Endothelial cell of umbilical vein (primary cell): ENCODE measurements at regions of chr6 and their contacts with region 1.

Region 1: GRCh38 chr6:151765444-151765886 is 42.0 kb upstream of the ESR1 start:
- DNase-seq: peak; percentile 98
- H3K4me3 ChIP-seq: no peak overlapping the region
- H3K27ac ChIP-seq: peak overlapping the region; percentile 74
- H3K4me1 ChIP-seq: peaks cover 22% of the 10 kb centered on the region
- H3K27me3 ChIP-seq: no peaks in the 10 kb centered on the region
- CTCF ChIP-seq: peak; percentile 50 to 59
- POLR2A ChIP-seq: no peak

Region 2: DNA sequence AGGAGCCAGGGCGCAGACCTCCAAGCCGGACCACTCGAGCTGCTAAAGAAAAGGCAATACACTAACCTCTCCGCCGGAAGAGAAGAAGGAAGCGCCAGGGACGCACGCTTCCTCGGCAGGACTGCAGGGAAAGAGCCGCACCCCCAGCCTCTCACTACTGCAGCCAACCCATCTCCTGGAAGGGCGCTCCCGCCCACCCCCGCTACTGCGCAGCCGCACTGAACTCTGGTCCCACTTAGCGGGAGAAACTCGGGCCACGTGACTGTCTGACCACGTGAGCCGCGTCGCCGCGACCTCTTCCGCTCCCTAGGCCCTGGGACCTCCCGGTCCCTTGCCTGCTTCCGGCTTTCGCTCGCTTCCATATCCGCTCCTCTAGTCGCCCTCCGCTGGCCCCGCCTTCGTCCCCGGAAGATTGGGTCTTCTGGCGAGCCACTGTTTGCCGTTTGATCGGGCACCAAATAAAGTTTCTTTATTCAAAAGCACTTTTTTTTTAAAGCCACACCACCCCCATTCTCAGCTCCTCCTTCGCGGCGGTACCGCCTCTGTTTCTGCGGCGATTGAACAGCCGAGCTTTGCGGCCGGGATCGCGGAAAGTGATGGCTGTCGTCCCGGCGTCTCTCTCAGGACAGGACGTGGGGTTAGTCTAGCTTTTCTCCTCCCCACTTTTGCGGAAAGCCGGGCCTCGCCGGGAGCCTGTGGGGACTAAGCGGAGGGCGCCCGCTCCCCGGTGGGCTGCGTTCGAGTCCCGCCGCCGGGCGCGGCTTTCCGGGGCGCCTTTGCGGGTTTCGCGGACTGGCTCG is 313.3 kb before region 1 on chr6 and contains the start of gene RMND1:
- CTCF ChIA-PET with region 1: no interaction called
- POLR2A ChIA-PET with region 1: no interaction called
- dilution Hi-C with region 1: no loop called
- intact Hi-C with region 1: loop called (anchors 1 kb)
- DNase-seq: peak; percentile 100
- H3K4me3 ChIP-seq: peak within 1 kb of the TSS; percentile 78 to 100 (median 100)
- H3K27ac ChIP-seq: peak within 1 kb of the TSS; percentile 78
- H3K4me1 ChIP-seq: peaks cover 13% of the 10 kb centered on the region
- H3K27me3 ChIP-seq: no peaks in the 10 kb centered on the region
- CTCF ChIP-seq: no peak
- POLR2A ChIP-seq: peak; percentile 93
- total RNA-seq, gene RMND1: 17.2 and 21.4 TPM in 2 replicates

Region 3: DNA sequence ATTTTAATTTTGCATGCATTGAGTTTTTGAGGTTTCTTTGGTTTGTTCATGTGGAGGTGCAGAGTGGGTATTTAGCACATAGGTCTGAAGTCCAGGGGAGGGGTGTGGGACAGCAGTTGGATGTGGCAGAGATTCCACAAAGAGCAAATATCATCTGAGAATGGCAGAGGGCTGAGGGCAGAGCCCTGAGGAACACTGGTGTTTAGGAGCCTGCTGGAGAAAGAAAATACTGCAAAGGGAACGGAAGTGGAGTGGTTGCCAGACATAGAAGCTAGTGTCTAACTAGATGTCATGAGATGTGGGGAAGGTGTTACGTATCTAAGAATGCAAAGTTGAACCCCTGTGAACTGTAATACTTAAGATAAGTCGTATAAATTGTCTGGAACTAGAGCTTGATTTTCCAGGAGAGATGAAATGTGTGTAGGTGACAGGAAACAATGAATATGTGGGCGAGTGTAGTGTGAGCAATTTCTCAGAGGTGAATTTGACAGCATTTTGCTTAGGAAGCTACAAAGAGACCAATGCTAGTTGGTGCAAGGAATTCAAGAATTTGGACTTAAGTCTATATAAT is 69.8 kb after region 1 on chr6:
- CTCF ChIA-PET with region 1: no interaction called
- POLR2A ChIA-PET with region 1: no interaction called
- dilution Hi-C with region 1: no loop called
- intact Hi-C with region 1: no loop called
- DNase-seq: no peak
- H3K4me3 ChIP-seq: no peak overlapping the region
- H3K27ac ChIP-seq: no peak overlapping the region
- H3K4me1 ChIP-seq: no peaks in the 10 kb centered on the region
- H3K27me3 ChIP-seq: no peaks in the 10 kb centered on the region
- CTCF ChIP-seq: no peak
- POLR2A ChIP-seq: no peak

Region 4: DNA sequence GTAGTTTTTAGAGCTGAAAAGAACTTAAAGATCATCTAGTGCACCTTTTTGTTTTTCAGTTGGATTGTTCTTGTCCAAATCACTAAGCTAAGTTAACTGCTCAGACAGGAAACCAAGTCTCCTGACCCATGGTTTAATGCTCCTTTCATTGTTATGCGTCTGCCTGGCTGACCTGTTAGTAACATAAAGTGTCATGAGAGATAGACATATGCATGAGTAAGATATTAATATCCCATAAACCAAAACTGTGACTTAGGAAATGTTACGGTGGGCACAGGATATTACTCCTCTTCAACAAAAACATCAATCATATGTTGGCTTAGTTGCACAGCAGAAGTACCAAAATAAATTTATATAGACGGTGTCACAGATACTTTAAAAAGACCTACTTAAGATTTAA is 126.1 kb after region 1 on chr6:
- CTCF ChIA-PET with region 1: interaction called, 10 read pairs
- POLR2A ChIA-PET with region 1: no interaction called
- dilution Hi-C with region 1: no loop called
- intact Hi-C with region 1: loop called (anchors 1 kb)
- DNase-seq: peak; percentile 96
- H3K4me3 ChIP-seq: peak overlapping the region in 1 of 3 experiments; percentile 23
- H3K27ac ChIP-seq: peak overlapping the region; percentile 60
- H3K4me1 ChIP-seq: peaks cover 19% of the 10 kb centered on the region
- H3K27me3 ChIP-seq: no peaks in the 10 kb centered on the region
- CTCF ChIP-seq: no peak
- POLR2A ChIP-seq: no peak

Region 5: GRCh38 chr6:152100183-152100618 is 334.7 kb after region 1 on chr6:
- CTCF ChIA-PET with region 1: interaction called, 13 read pairs
- POLR2A ChIA-PET with region 1: interaction called, 3 read pairs
- dilution Hi-C with region 1: no loop called
- intact Hi-C with region 1: loop called (anchors 1 kb)
- DNase-seq: peak; percentile 68
- H3K4me3 ChIP-seq: no peak overlapping the region
- H3K27ac ChIP-seq: peak overlapping the region; percentile 58
- H3K4me1 ChIP-seq: peaks cover 38% of the 10 kb centered on the region
- H3K27me3 ChIP-seq: no peaks in the 10 kb centered on the region
- CTCF ChIP-seq: no peak
- POLR2A ChIP-seq: no peak

Region 6: GRCh38 chr6:152129691-152130151 is 364.3 kb after region 1 on chr6:
- CTCF ChIA-PET with region 1: interaction called, 178 read pairs
- POLR2A ChIA-PET with region 1: no interaction called
- dilution Hi-C with region 1: no loop called
- intact Hi-C with region 1: loop called (anchors 1 kb)
- DNase-seq: peak; percentile 92
- H3K4me3 ChIP-seq: peak overlapping the region; percentile 13 to 65 (median 22)
- H3K27ac ChIP-seq: peak overlapping the region; percentile 73
- H3K4me1 ChIP-seq: peaks cover 14% of the 10 kb centered on the region
- H3K27me3 ChIP-seq: no peaks in the 10 kb centered on the region
- CTCF ChIP-seq: no peak
- POLR2A ChIP-seq: no peak

Region 7: DNA sequence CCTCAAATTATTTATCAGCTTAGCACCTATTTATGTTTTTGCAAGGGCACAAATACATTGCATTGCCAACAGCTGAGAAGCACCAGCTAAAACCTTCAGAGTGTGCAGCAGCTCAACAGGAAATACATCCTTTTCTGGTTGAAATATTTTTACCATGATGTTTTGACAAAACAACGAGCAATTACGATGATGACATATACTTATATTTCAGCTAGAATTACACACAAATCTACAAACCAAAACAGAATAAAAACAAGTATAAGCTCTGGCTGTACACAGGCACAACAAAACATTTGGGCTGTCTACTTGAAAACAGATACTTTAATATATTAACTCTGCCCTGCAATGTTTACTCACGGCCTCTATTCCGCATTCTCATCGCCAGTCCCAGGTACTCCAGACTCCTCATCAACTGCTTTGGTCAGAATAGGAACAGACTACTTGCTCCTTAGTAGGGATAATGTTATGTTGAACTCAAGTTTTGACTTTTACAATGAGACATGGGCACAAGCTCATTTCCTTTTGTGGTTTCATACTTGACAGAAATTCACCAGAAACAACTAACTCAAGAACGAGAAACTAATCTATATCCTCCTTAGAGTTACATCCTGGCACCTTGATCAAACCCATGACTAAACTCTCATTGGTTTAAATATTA is 419.6 kb after region 1 on chr6:
- CTCF ChIA-PET with region 1: no interaction called
- POLR2A ChIA-PET with region 1: no interaction called
- dilution Hi-C with region 1: no loop called
- intact Hi-C with region 1: no loop called
- DNase-seq: no peak
- H3K4me3 ChIP-seq: no peak overlapping the region
- H3K27ac ChIP-seq: no peak overlapping the region
- H3K4me1 ChIP-seq: no peaks in the 10 kb centered on the region
- H3K27me3 ChIP-seq: no peaks in the 10 kb centered on the region
- CTCF ChIP-seq: no peak
- POLR2A ChIP-seq: no peak

Region 8: DNA sequence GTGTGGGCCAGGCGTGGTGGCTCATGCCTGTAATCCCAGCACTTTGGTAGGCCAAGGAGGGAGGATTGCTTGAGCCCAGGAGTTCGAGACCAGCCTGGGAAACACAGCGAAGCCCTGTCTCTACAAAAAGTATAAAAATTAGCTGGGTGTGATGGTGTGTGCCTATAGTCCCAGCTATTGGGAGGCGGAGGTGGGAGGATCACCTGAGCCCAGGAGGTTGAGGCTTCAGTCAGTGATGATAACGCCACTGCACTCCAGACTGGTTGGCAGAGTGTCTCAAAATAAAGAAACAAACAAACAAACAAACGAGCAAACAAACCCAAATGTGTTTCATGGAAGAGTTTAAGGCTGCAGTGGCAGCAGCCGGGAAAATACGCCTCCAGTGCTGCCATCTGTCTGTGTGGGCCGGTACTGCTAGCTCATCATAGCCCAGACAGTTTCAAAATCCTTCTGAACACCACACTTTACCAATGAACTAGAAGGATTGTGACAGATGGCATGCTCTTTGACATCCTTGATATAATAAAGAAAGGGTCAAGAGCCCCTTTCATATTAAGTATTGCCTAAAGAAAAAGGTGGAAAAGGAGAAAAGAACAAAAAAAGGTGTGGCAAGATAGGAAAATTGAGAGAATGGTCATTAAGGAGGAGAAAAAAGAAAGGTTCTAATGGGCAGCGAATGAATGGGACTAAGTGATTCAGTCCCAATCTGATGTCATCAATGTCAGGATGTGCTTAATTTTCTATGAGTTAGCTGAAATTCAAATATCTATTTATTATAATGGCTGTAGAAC is 573.1 kb after region 1 on chr6:
- CTCF ChIA-PET with region 1: interaction called, 14 read pairs
- POLR2A ChIA-PET with region 1: no interaction called
- dilution Hi-C with region 1: no loop called
- intact Hi-C with region 1: no loop called
- DNase-seq: peak; percentile 68
- H3K4me3 ChIP-seq: no peak overlapping the region
- H3K27ac ChIP-seq: no peak overlapping the region
- H3K4me1 ChIP-seq: no peaks in the 10 kb centered on the region
- H3K27me3 ChIP-seq: no peaks in the 10 kb centered on the region
- CTCF ChIP-seq: peak; percentile 87 to 89
- POLR2A ChIP-seq: no peak

Region 9: DNA sequence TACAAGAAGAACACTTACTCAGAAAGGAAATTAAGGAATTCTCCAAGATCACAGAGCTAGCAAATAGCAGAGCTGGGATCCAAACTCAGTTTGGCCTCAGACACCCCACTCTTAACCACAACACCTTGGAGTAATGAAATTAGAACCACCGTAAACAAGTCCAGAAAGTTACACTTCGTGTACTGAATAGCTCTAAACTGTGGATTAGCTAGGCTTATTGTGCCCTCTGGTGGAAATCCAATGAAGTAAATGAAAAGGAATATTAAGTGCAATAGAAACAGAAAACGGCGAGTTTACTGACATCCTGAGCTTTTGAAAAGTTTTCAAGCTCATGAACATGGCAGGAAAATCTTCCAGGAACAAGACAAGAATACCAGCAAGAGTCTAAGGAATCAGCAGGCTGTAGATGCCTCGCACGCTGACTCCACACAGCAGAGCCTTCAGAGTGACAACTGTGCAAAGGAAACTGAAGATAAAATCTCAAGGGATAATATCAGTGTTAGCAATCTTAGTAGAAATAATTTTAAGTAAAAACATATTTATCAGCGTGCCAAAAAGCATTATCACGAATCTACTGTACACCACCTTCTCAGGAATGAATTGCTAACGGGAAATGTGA is 1182.8 kb after region 1 on chr6:
- CTCF ChIA-PET with region 1: no interaction called
- POLR2A ChIA-PET with region 1: no interaction called
- dilution Hi-C with region 1: no loop called
- intact Hi-C with region 1: loop called (anchors 5 kb)
- DNase-seq: peak; percentile 64
- H3K4me3 ChIP-seq: no peak overlapping the region
- H3K27ac ChIP-seq: no peak overlapping the region
- H3K4me1 ChIP-seq: peaks cover 11% of the 10 kb centered on the region
- H3K27me3 ChIP-seq: no peaks in the 10 kb centered on the region
- CTCF ChIP-seq: peak; percentile 41 to 46
- POLR2A ChIP-seq: no peak